HepG2 (cell line): ENCODE measurements at regions of chr5 and their contacts with region 1.

Region 1: GRCh38 chr5:96198356-96199058 is 234.5 kb downstream of the PCSK1 start:
- DNase-seq: no peak
- ATAC-seq: no peak
- H3K4me3 ChIP-seq: no peak overlapping the region; a peak in 1 of 6 replicates
- H3K27ac ChIP-seq: peak overlapping the region; percentile 97
- H3K4me1 ChIP-seq: peaks cover 88% of the 10 kb centered on the region
- H3K27me3 ChIP-seq: no peaks in the 10 kb centered on the region
- CTCF ChIP-seq: no peak
- EP300 ChIP-seq: no peak
- POLR2A ChIP-seq: no peak
- RAD21 ChIP-seq: no peak

Region 2: GRCh38 chr5:95954716-95955115 is 243.8 kb before region 1 on chr5:
- CTCF ChIA-PET with region 1: no interaction called
- POLR2A ChIA-PET with region 1: interaction called, 3 read pairs
- in situ Hi-C with region 1: no loop called
- intact Hi-C with region 1: loop called (anchors 1 kb)
- DNase-seq: no peak
- ATAC-seq: no peak
- H3K4me3 ChIP-seq: no peak overlapping the region; a peak in 1 of 6 replicates
- H3K27ac ChIP-seq: no peak overlapping the region
- H3K4me1 ChIP-seq: peaks cover 72% of the 10 kb centered on the region
- H3K27me3 ChIP-seq: no peaks in the 10 kb centered on the region; a peak in 1 of 5 replicates
- CTCF ChIP-seq: no peak
- EP300 ChIP-seq: no peak
- POLR2A ChIP-seq: no peak
- RAD21 ChIP-seq: no peak

Region 3: GRCh38 chr5:96187309-96188027 is 11.0 kb before region 1 on chr5:
- CTCF ChIA-PET with region 1: no interaction called
- POLR2A ChIA-PET with region 1: interaction called, 24 read pairs
- in situ Hi-C with region 1: no loop called
- intact Hi-C with region 1: no loop called
- DNase-seq: peak; percentile 93
- ATAC-seq: peak; percentile 98
- H3K4me3 ChIP-seq: no peak overlapping the region; a peak in 1 of 6 replicates
- H3K27ac ChIP-seq: peak overlapping the region; percentile 61
- H3K4me1 ChIP-seq: peaks cover 47% of the 10 kb centered on the region
- H3K27me3 ChIP-seq: no peaks in the 10 kb centered on the region
- CTCF ChIP-seq: no peak
- EP300 ChIP-seq: peak; percentile 13 to 81; a peak in 2 of 4 replicates
- POLR2A ChIP-seq: no peak
- RAD21 ChIP-seq: no peak; the same call in 1 of the 2 replicates

Region 4: DNA sequence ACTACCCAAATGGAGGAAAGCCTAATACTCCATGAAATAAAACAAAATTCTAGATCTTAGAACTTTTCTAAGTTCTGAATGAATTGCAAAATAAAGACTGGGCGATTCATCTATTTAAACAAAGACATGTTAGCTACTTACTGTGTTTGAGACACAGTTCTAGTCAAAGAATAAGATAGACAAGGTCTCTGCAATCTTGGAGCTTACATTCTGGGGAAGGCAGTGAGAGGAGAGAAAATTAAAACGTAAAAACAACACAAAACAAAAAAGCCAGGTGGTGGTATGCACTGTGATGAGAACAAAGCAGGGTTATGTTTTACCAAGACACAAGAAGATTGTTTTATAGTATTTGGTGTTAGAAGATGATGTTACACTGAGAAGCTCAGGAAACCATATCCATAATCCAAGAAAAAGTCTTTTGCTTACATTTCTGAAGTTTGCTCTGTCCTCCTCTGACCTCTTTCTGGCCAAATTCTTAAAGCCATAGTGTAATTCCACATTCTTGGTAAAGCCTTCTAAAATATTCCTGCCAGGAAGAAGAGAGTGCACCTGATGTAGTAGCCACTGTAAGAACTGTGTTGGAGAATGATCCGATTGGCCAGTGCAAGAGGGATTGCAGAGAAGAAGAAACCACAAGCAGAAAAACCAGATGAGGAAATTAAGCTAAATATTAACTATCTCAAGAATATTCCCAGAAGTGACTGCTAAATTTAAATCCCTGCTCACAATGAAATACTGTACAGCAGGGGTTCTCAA is 16.1 kb after region 1 on chr5:
- CTCF ChIA-PET with region 1: no interaction called
- POLR2A ChIA-PET with region 1: interaction called, 15 read pairs
- in situ Hi-C with region 1: no loop called
- intact Hi-C with region 1: no loop called
- DNase-seq: peak; percentile 28
- ATAC-seq: no peak
- H3K4me3 ChIP-seq: peak overlapping the region in 1 of 3 experiments; percentile 4; a peak in 2 of 6 replicates
- H3K27ac ChIP-seq: no peak overlapping the region
- H3K4me1 ChIP-seq: peaks cover 16% of the 10 kb centered on the region
- H3K27me3 ChIP-seq: no peaks in the 10 kb centered on the region
- CTCF ChIP-seq: no peak
- EP300 ChIP-seq: no peak
- POLR2A ChIP-seq: no peak
- RAD21 ChIP-seq: no peak

Region 5: DNA sequence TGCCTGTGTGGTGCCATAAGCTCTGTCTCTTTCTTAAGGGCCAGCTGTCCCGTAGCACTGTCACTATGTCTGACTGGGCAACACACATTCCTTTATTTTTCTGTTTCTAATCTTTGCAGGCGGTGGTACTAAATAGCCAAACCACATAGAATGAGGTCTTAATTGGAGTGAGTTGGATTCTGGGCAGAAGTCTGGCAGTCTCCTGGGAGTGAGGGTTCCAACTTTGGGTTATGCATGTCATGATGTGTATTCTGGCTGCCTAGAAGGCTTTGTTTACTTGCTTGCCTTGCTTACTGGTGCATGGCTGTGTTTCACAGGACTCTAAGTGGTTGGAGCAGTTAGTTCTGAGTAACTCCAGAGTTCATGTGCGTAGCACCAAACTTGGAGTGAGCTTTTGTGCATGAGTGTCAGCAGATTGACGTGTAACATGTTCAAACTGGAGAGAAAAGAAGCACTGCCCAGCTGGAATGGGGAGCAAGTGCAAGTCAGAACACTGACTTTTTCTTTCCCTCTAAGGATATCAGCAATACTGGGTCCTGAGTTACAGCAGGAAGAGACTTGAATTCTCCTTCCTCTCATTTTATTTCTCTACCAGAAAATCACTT is 48.7 kb after region 1 on chr5:
- CTCF ChIA-PET with region 1: no interaction called
- POLR2A ChIA-PET with region 1: interaction called, 4 read pairs
- in situ Hi-C with region 1: no loop called
- intact Hi-C with region 1: loop called (anchors 2 kb)
- DNase-seq: no peak
- ATAC-seq: no peak
- H3K4me3 ChIP-seq: no peak overlapping the region
- H3K27ac ChIP-seq: no peak overlapping the region
- H3K4me1 ChIP-seq: peaks cover 77% of the 10 kb centered on the region
- H3K27me3 ChIP-seq: no peaks in the 10 kb centered on the region
- CTCF ChIP-seq: no peak
- EP300 ChIP-seq: no peak
- POLR2A ChIP-seq: no peak
- RAD21 ChIP-seq: no peak